ENCODE measurements at regions of chr7 and their contacts with region 1.

Region 1: DNA sequence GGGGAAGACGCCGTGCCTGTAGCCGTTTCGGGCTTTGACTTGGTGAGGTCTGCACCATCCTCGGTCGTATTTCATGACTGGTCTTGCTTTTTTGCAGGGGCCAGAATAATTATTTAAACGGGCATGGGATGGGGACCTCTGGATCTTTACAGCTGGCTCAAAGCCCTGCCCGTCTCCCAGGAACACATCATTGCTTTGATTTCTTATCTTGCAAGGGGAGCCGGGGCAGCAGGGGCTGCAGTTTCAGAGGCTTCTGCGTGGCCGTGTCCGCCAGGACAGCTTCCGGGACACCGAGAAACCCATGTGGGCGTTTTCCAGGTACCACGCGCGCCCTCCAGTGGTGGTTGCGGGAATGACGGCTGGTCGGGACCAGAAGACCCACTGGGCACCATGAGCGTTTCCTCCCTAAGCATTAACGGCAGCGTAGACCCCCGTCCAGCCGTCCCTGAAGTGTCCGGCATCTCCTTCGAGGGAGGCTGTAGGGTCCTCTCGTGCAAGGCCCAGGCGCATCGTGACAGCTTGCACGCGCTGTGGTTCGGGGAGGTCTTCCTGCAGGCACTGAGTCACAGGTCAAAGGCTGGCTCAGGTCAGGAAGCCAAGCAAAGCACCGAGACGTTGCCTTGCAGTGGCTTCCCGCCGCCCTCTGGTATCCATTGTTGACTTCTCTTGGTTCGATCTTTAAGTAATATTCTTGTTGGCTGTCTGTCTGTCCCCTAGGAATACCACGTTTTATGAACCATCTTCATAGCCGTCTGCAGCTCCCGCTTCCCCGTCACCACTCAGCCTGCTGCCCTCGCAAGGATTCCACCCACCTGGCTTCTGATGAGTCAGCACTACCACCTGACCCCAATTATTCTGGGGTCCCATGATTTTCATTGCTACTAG is 16.2 kb upstream of the ZFAND2A start:
- DNase-seq: peak; percentile 88
- ATAC-seq: peak; percentile 89
- H3K4me3 ChIP-seq: peak overlapping the region; percentile 59
- H3K27ac ChIP-seq: no peak overlapping the region
- H3K4me1 ChIP-seq: peaks cover 7% of the 10 kb centered on the region; the same call in 1 of the 2 replicates
- H3K27me3 ChIP-seq: no peaks in the 10 kb centered on the region
- CTCF ChIP-seq: peak; percentile 85

Region 2: DNA sequence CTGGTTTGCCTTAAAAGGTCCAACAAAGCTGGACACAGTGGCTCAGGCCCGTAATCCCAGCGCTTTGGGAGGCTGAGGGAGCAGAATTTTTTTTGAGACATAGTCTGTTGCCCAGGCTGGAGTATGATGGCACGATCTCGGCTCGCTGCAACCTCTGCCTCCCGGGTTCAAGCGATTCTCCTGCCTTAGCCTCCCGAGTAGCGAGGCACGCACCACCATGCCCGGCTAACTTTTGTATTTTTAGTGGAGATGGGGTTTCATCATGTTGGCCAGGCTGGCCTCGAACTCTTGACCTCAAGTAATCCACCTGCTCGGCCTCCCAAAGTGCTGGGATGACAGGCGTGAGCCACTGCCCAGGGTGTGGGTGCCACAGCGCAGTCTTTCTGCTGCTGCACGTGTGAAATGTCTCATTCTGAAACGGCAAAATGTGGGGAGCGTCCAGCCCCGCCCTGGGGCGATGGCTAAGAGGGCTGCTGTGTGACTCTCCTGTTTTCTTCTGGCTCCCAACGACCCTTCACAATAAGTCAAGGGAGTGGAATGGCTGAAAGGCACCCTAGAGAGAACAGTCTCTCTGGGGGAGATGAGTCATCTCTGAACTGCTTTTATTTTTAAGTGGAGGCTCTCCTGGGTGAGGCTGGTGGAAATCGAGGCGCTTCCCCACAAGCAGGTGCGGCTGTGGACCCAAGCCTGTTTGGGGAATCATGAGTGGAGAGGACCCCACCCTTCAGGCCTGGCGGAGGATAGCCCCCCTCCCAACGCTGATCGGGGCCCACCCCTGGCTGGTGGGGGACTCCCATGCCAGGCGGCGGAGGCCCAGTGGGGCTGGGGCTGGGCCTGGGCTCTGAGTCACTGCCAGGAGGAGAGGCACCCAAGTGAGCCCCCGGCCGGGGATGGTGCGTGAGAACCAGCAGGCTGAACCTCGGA is 239.8 kb before region 1 on chr7:
- CTCF ChIA-PET with region 1: no interaction called
- POLR2A ChIA-PET with region 1: no interaction called
- intact Hi-C with region 1: no loop called
- DNase-seq: peak; percentile 31
- ATAC-seq: peak; percentile 73
- H3K4me3 ChIP-seq: no peak overlapping the region
- H3K27ac ChIP-seq: no peak overlapping the region
- H3K4me1 ChIP-seq: no peaks in the 10 kb centered on the region
- H3K27me3 ChIP-seq: no peaks in the 10 kb centered on the region
- CTCF ChIP-seq: no peak

Region 3: GRCh38 chr7:1144269-1144771 is 31.9 kb before region 1 on chr7:
- CTCF ChIA-PET with region 1: no interaction called
- POLR2A ChIA-PET with region 1: no interaction called
- intact Hi-C with region 1: loop called (anchors 2 kb)
- DNase-seq: peak; percentile 54
- ATAC-seq: peak; percentile 96
- H3K4me3 ChIP-seq: no peak overlapping the region
- H3K27ac ChIP-seq: no peak overlapping the region
- H3K4me1 ChIP-seq: no peaks in the 10 kb centered on the region
- H3K27me3 ChIP-seq: no peaks in the 10 kb centered on the region
- CTCF ChIP-seq: peak; percentile 48

Region 4: DNA sequence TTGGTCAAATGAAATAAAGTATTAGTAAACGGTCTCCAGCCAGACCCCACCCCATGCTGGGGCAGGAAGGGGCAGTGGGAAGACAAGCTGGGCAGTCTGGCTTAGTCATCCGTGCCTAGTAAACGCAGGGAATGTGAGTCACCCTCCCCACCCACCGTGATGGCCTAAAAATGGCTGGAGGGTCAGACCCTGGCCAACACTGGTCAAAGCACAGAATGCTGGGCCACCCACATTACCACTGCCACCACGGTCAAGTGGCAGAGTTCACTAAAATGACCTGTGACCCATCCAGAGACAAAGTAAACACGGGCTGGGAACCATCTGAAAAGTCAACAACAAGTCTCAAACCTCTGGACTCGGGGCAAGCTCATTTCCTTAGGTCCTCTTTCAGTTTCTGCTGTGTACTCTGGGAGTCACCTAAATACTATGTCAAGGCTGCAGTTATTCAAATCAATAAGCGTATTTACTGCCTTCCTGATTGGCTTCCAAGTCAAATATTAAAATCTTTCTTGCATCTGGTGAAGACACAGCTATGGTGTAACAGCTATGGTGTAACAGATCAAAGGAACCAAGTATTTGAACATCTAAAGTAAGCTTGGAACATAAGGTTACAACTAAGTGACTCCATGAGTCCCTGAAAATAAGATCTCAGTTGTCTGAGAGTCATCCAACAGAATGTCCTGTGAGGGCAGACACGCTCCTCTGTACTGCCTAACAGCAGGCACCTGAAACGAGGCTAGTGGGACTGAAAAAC is 19.2 kb before region 1 on chr7:
- CTCF ChIA-PET with region 1: interaction called, 11 read pairs
- POLR2A ChIA-PET with region 1: interaction called, 3 read pairs
- intact Hi-C with region 1: loop called (anchors 2 kb)
- DNase-seq: peak; percentile 84
- ATAC-seq: peak; percentile 67
- H3K4me3 ChIP-seq: peak overlapping the region; percentile 88; the same call in 1 of the 2 replicates
- H3K27ac ChIP-seq: peak overlapping the region; percentile 87
- H3K4me1 ChIP-seq: peaks cover 28% of the 10 kb centered on the region
- H3K27me3 ChIP-seq: no peaks in the 10 kb centered on the region
- CTCF ChIP-seq: no peak